Activated CD8-positive, alpha-beta T cell treated with anti-CD3 and anti-CD28 coated beads for 36 hours (primary cell): ENCODE measurements at regions of chr3 and their contacts with region 1.

Region 1: DNA sequence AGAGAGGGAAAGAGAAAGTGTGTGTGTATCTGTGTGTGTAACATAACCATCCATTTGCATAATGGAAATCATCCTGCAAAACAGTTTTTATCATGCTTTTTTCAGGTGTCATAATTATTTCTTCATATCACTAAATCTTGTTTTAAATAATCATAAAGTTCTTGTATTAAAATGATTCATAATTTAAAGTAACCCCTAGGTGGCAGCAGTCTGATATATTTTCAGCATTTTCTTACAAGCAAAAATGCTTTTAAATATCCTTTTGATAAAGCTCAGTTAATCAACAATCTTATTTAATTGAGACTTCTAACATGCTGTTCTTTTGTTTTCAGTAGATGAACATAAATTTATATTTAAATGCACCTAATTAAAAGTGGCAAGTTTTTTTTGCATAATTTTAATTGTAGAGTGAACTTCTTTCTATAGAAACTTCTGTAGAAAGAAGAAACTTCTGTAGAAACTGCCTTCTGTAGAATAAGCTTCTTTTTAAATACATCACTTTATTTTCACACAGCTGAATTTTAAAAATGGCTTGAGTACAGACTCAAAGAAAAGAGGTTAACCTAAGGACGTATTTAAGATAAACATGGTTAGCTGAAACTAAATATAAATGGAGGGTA is 72.5 kb downstream of the OPA1 start:
- DNase-seq: no peak
- ATAC-seq: no peak
- H3K4me3 Mint-ChIP-seq: no peak overlapping the region
- H3K27ac Mint-ChIP-seq: no peak overlapping the region
- H3K4me1 Mint-ChIP-seq: no peaks in the 10 kb centered on the region
- H3K27me3 Mint-ChIP-seq: no peaks in the 10 kb centered on the region
- CTCF ChIP-seq: peak; percentile 74

Region 2: DNA sequence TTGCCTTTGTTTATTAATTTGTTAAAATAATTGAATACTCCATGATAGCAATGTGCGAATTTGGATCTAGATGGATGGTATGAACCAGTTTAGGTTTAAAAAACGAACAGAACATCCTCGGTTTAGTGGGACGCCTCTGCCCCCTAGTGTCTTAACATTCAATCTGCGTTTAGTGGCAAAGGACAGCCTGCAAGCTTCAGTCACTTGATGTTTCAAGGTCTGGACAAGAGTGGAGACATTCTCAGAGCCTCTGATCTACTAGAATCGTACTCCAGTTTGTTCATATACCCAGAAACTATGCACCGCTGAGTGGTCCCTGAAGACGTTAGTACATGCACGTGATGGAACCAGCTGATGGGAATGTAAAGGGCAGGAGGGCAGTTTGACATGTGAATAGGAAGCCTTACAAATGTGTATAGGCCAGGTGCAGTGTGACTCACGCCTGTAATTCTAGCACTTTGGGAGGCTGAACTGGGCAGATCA is 93.0 kb before region 1 on chr3:
- CTCF ChIA-PET with region 1: no interaction called
- POLR2A ChIA-PET with region 1: no interaction called
- intact Hi-C with region 1: no loop called
- DNase-seq: peak; percentile 63
- ATAC-seq: peak; percentile 73
- H3K4me3 Mint-ChIP-seq: no peak overlapping the region
- H3K27ac Mint-ChIP-seq: no peak overlapping the region
- H3K4me1 Mint-ChIP-seq: no peaks in the 10 kb centered on the region
- H3K27me3 Mint-ChIP-seq: no peaks in the 10 kb centered on the region
- CTCF ChIP-seq: peak; percentile 78

Region 3: GRCh38 chr3:193645806-193646205 is 19.7 kb before region 1 on chr3:
- CTCF ChIA-PET with region 1: interaction called, 12 read pairs
- POLR2A ChIA-PET with region 1: interaction called, 4 read pairs
- intact Hi-C with region 1: no loop called
- DNase-seq: no peak
- ATAC-seq: no peak
- H3K4me3 Mint-ChIP-seq: no peak overlapping the region
- H3K27ac Mint-ChIP-seq: no peak overlapping the region
- H3K4me1 Mint-ChIP-seq: no peaks in the 10 kb centered on the region
- H3K27me3 Mint-ChIP-seq: no peaks in the 10 kb centered on the region
- CTCF ChIP-seq: no peak